ENCODE measurements at regions of chr5 and their contacts with region 1.

Region 1: GRCh38 chr5:150497274-150497988 is 10.5 kb upstream of the NDST1 start:
- DNase-seq: no peak
- ATAC-seq: no peak
- H3K4me3 Mint-ChIP-seq: no peak overlapping the region
- H3K27ac Mint-ChIP-seq: peak overlapping the region; percentile 92
- H3K4me1 Mint-ChIP-seq: peaks cover 64% of the 10 kb centered on the region
- H3K27me3 Mint-ChIP-seq: no peaks in the 10 kb centered on the region
- CTCF ChIP-seq: no peak

Region 2: DNA sequence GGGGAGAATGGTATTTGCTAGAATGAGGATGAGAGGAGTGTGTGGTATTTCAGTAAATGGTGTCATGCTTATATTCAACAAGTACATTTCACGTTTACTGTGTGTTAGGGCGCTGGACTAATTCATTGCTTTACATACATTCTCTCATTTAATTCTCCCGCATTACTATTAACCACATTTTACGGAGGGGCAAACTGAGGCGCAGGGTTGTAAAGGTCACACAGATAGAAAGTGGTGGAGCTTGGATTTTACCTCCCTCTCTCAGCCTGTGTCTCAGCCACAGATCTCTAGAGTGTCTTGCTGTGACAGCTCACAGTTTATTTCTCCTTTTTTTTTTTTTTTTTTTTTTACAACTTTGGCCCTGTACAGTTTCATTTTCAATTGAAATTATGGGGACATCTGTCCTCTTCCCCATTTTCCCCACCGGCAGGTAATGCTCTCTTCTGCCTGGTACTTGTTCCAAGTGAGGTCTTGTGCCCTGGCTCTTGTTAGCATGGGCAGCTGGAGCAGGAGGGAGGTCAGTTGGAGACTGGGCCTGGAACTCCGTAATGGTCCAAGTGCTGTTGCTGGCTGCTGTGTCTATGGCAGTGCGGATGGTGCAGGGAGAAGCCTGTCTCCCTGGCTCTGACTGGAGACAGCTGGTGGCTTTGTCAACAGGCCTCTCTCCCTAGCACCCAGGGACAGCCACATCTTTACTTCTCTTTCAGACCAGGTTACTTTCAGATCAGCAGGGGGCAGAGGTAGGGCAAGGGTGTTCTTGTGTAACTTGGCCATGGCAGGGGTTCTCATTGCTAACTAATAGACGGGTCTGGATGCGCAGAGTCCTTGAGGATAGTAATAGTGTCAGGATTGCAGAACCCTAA is 10.0 kb before region 1 on chr5:
- CTCF ChIA-PET with region 1: interaction called, 10 read pairs
- POLR2A ChIA-PET with region 1: interaction called, 9 read pairs
- DNase-seq: no peak
- ATAC-seq: no peak
- H3K4me3 Mint-ChIP-seq: peak overlapping the region; percentile 70
- H3K27ac Mint-ChIP-seq: peak overlapping the region; percentile 55
- H3K4me1 Mint-ChIP-seq: peaks cover 70% of the 10 kb centered on the region
- H3K27me3 Mint-ChIP-seq: no peaks in the 10 kb centered on the region
- CTCF ChIP-seq: no peak

Region 3: GRCh38 chr5:150511578-150512367 is 14.3 kb after region 1 on chr5:
- CTCF ChIA-PET with region 1: interaction called, 15 read pairs
- POLR2A ChIA-PET with region 1: interaction called, 3 read pairs
- DNase-seq: peak; percentile 64
- ATAC-seq: peak; percentile 43
- H3K4me3 Mint-ChIP-seq: peak overlapping the region; percentile 29; the same call in 1 of the 2 replicates
- H3K27ac Mint-ChIP-seq: peak overlapping the region; percentile 79
- H3K4me1 Mint-ChIP-seq: peaks cover 61% of the 10 kb centered on the region
- H3K27me3 Mint-ChIP-seq: no peaks in the 10 kb centered on the region
- CTCF ChIP-seq: no peak

Measured in WTC11 (cell line).